IMR-90 (cell line): ENCODE measurements at regions of chr15 and their contacts with region 1.

Region 1: DNA sequence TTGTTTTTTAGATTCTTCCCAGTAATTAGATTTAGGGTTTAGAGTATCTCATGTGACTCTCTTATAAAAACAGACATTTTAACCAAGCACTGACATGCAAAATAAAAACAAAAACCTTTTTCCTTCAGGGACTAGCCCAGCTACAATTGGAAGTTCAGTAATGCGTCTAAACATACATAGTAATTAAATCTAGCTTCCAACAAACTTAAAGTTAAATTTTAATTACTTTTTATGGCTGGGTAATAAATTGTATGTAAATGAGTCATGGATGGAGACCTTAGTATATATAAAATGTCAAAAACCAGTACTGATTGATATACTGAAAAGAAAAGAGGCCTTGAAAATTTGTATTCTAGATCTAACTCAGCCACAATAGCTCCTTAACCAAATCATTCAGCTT is 43.6 kb upstream of the AP4E1 start:
- DNase-seq: no peak
- ATAC-seq: no peak
- H3K4me3 ChIP-seq: no peak overlapping the region
- H3K27ac ChIP-seq: no peak overlapping the region
- H3K4me1 ChIP-seq: no peaks in the 10 kb centered on the region
- H3K27me3 ChIP-seq: peaks cover 12% of the 10 kb centered on the region
- CTCF ChIP-seq: no peak
- POLR2A ChIP-seq: no peak
- RAD21 ChIP-seq: no peak

Region 2: DNA sequence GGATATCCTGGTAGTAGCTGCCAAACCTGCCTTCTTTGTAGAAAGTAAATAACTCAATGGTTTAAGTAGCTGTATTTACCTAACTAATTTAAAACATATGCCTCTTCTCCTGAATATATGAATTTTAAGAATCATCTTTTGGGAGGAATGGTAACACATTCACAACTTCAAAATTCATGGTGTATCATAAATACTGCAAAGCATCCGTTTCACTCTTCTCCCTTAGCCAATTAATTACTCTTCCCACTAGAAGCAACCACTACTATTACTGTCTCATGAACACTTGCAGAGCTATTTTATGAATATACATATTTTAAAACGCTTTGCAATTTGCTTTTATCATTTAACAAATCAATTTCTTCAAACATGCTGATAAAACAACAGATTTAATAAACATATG is 259.4 kb before region 1 on chr15:
- CTCF ChIA-PET with region 1: no interaction called
- POLR2A ChIA-PET with region 1: no interaction called
- dilution Hi-C with region 1: no loop called
- in situ Hi-C with region 1: no loop called
- intact Hi-C with region 1: no loop called
- DNase-seq: no peak
- ATAC-seq: no peak
- H3K4me3 ChIP-seq: no peak overlapping the region
- H3K27ac ChIP-seq: no peak overlapping the region
- H3K4me1 ChIP-seq: no peaks in the 10 kb centered on the region
- H3K27me3 ChIP-seq: no peaks in the 10 kb centered on the region
- CTCF ChIP-seq: no peak
- POLR2A ChIP-seq: no peak
- RAD21 ChIP-seq: no peak

Region 3: GRCh38 chr15:50819344-50819743 is 45.5 kb before region 1 on chr15:
- CTCF ChIA-PET with region 1: no interaction called
- POLR2A ChIA-PET with region 1: no interaction called
- dilution Hi-C with region 1: no loop called
- in situ Hi-C with region 1: no loop called
- intact Hi-C with region 1: loop called (anchors 5 kb)
- DNase-seq: no peak
- ATAC-seq: no peak
- H3K4me3 ChIP-seq: no peak overlapping the region
- H3K27ac ChIP-seq: no peak overlapping the region
- H3K4me1 ChIP-seq: no peaks in the 10 kb centered on the region
- H3K27me3 ChIP-seq: peaks cover 12% of the 10 kb centered on the region
- CTCF ChIP-seq: no peak
- POLR2A ChIP-seq: no peak
- RAD21 ChIP-seq: no peak

Region 4: DNA sequence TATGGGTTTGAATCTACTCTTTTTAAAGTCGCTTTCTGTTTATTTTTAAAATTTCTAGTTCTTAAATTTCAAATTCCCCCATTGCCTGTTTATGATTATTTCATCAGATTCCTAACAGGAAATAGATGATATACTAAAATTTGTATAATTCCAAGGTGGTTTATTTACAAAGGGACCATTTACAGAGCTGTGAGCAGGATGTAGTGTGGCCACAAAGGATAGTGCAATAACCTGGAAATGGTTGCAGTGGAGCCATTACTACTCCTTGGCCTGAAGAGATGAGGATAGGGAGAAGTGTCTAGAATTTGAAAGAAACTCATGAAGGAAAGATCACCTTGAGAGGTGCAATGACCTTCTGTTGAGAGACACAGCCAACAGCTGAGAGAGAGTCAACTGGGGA is 14.9 kb before region 1 on chr15:
- CTCF ChIA-PET with region 1: no interaction called
- POLR2A ChIA-PET with region 1: no interaction called
- dilution Hi-C with region 1: no loop called
- in situ Hi-C with region 1: no loop called
- intact Hi-C with region 1: no loop called
- DNase-seq: no peak
- ATAC-seq: no peak
- H3K4me3 ChIP-seq: no peak overlapping the region
- H3K27ac ChIP-seq: no peak overlapping the region
- H3K4me1 ChIP-seq: no peaks in the 10 kb centered on the region
- H3K27me3 ChIP-seq: no peaks in the 10 kb centered on the region; the same call in 1 of the 2 replicates
- CTCF ChIP-seq: no peak
- POLR2A ChIP-seq: no peak
- RAD21 ChIP-seq: no peak